Left cardiac atrium (tissue), 4 donors: ENCODE measurements at regions of chr10 and their contacts with region 1.

Region 1: DNA sequence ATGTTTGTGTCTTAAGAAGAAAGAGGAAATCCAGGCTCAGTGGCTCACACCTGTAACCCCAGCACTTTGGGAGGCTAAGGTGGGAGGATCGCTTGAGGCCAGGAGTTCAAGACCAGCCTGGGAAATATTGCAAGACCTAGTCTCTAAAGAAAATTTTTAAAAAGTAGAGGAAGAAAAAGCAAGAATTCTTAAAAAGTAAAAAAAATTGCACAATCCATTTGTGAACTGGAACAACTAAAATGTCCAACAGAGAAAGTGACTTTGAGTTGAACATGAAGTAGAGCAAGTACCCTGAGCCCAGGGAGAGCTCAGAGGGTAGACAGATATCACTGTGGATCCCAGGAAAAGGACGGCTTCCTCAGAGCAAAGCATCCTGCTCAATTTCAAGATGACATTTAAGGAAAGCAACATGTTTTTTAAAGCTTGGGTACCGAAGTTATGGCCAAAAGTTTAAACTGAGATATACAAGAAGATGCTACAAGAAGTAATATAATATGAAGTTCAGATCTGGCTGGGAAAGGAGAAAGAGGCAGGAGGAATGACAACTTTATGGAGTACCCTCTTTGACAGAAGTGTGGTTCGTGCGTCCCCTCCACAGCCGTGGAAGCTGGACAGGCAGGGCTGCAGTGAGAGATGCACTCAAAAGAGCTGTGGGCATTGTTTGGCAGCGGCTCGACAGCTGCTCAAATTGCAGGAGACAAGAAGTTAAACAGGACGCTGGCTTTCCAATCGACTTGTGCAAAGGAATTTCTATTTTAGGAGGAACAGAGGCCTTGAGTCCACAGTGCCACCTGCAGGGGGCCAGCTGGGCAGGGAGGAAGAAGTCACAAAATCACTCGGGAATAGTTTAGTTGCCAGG is 201.3 kb downstream of the JCAD start:
- DNase-seq: peak; percentile 63
- ATAC-seq: peak; percentile 73 to 92

Region 2: DNA sequence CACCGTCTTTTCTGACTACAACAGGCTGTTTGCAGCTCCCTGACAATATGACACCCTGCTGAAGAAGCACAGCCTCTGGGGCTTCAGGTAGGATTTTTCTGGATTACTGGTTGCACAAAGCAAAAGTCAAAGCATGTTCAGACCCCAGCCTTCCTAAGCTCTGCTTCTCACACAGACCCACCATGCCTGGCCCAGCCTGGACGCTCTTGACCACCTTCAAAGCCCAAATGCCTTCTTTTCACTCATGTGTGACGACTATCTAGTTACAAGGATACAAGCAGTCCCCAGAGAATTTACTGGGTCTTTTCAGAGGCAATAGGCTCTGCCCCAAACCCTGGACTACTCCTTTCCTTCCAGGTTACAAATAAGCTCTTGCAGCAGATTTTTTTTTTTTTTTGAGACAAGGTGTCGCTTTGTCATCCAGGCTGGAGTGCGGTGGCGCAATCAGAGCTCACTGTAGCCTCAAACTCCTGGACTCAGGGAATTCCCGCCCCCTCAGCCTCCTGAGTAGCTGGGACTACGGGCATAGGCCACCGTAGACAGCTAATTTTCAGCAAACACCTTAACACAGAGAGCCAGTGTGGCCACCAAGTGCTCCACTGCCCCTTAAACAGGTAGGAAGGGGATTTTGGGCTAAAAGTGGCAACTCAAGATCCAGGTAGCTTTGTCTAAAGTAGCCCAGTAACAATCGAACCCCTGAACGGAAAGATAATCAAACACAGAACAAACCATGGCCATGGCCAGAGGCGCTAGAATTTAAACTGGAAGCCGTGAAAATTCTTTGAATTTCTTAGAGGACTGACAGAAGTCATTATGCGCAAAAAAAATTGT is 239.5 kb before region 1 on chr10:
- intact Hi-C with region 1: loop called in 1 of 2 experiments (anchors 10 kb)
- DNase-seq: peak; percentile 45
- ATAC-seq: peak in 1 of 2 donors; percentile 52